MCF 10A (cell line): ENCODE measurements at regions of chr2 and their contacts with region 1.

Region 1: DNA sequence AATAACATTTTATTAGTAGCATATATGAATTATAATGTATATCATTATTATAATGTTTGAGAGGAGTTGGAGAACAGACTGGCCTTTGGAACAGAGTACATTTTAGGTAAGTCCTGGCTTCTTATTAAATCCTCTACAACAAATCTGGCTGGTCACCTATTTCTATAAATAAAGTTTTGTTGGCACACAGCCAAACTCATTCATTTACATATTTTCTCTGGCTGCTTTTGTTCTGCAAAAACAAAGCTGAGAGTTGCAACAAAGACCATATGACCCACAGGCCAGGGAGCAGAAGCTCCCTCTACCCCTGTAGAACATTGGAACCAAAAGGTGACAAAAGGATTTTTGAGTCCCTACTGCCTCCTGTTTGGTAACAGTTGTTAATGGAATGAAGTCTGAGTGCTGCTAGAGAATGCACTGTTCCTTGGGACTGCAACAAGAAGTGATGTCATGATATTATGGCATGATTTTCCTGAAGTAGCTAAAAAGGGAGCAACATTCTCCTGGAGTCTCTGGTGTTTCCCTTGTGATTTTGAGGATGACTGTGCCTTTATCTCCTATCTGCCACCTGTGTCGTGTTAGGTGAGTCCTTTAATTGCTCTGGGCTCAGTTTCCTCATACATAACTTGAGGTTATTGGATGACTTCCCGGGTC is 22.0 kb upstream of the SP9 start:
- DNase-seq: peak; percentile 6
- H3K4me3 Mint-ChIP-seq: no peak overlapping the region
- H3K27ac Mint-ChIP-seq: no peak overlapping the region
- H3K4me1 Mint-ChIP-seq: no peaks in the 10 kb centered on the region
- H3K27me3 Mint-ChIP-seq: peaks cover 11% of the 10 kb centered on the region
- CTCF ChIP-seq: no peak

Region 2: GRCh38 chr2:173884025-173884802 is 428.5 kb before region 1 on chr2:
- CTCF ChIA-PET with region 1: interaction called, 10 read pairs
- POLR2A ChIA-PET with region 1: no interaction called
- intact Hi-C with region 1: no loop called
- DNase-seq: peak; percentile 68
- H3K4me3 Mint-ChIP-seq: no peak overlapping the region
- H3K27ac Mint-ChIP-seq: no peak overlapping the region
- H3K4me1 Mint-ChIP-seq: no peaks in the 10 kb centered on the region
- H3K27me3 Mint-ChIP-seq: no peaks in the 10 kb centered on the region
- CTCF ChIP-seq: peak; percentile 67